GM12878 (cell line): ENCODE measurements at regions of chr10 and their contacts with region 1.

Region 1: GRCh38 chr10:110547139-110547761 is 20.2 kb upstream of the SMC3 start:
- DNase-seq: no peak
- ATAC-seq: peak; percentile 89
- H3K4me3 ChIP-seq: no peak overlapping the region
- H3K27ac ChIP-seq: no peak overlapping the region
- H3K4me1 ChIP-seq: peaks cover 5% of the 10 kb centered on the region; the same call in 1 of the 2 replicates
- H3K27me3 ChIP-seq: peaks cover 0 to 2% of the 10 kb centered on the region in 2 experiments; a peak in 1 of 4 replicates
- CTCF ChIP-seq: peak; percentile 72 to 83 (median 73)
- EP300 ChIP-seq: no peak
- POLR2A ChIP-seq: no peak
- RAD21 ChIP-seq: peak; percentile 95

Region 2: GRCh38 chr10:110304780-110305421 is 242.3 kb before region 1 on chr10 and contains the start of gene SMNDC1:
- CTCF ChIA-PET with region 1: interaction called, 191 read pairs
- POLR2A ChIA-PET with region 1: interaction called, 7 read pairs
- RAD21 ChIA-PET with region 1: interaction called, 151 read pairs
- SMC1A ChIA-PET with region 1: interaction called, 69 read pairs
- in situ Hi-C with region 1: loop called (anchors 5 kb)
- intact Hi-C with region 1: no loop called
- DNase-seq: peak; percentile 89
- ATAC-seq: peak; percentile 91
- H3K4me3 ChIP-seq: peak within 1 kb of the TSS; percentile 81
- H3K27ac ChIP-seq: peak within 1 kb of the TSS; percentile 88
- H3K4me1 ChIP-seq: peaks cover 7% of the 10 kb centered on the region; the same call in 1 of the 2 replicates
- H3K27me3 ChIP-seq: no peaks in the 10 kb centered on the region
- CTCF ChIP-seq: no peak
- EP300 ChIP-seq: no peak
- POLR2A ChIP-seq: peak; percentile 88
- RAD21 ChIP-seq: no peak
- polyA plus RNA-seq, gene SMNDC1: 10.1 to 12.9 TPM

Region 3: GRCh38 chr10:110317866-110318850 is 229.1 kb before region 1 on chr10:
- CTCF ChIA-PET with region 1: interaction called, 79 read pairs
- POLR2A ChIA-PET with region 1: interaction called, 4 read pairs
- RAD21 ChIA-PET with region 1: interaction called, 74 read pairs
- SMC1A ChIA-PET with region 1: interaction called, 31 read pairs
- in situ Hi-C with region 1: loop called (anchors 5 kb)
- intact Hi-C with region 1: no loop called
- DNase-seq: no peak
- ATAC-seq: peak; percentile 84
- H3K4me3 ChIP-seq: no peak overlapping the region
- H3K27ac ChIP-seq: peak overlapping the region; percentile 17
- H3K4me1 ChIP-seq: peaks cover 5% of the 10 kb centered on the region; the same call in 1 of the 2 replicates
- H3K27me3 ChIP-seq: no peaks in the 10 kb centered on the region
- CTCF ChIP-seq: no peak
- EP300 ChIP-seq: no peak
- POLR2A ChIP-seq: no peak
- RAD21 ChIP-seq: no peak

Region 4: GRCh38 chr10:110502851-110503301 is 44.4 kb before region 1 on chr10:
- CTCF ChIA-PET with region 1: interaction called, 44 read pairs
- POLR2A ChIA-PET with region 1: interaction called, 5 read pairs
- RAD21 ChIA-PET with region 1: interaction called, 62 read pairs
- SMC1A ChIA-PET with region 1: interaction called, 81 read pairs
- in situ Hi-C with region 1: no loop called
- intact Hi-C with region 1: loop called (anchors 1 kb)
- DNase-seq: peak; percentile 93
- ATAC-seq: peak; percentile 35
- H3K4me3 ChIP-seq: peak overlapping the region; percentile 95
- H3K27ac ChIP-seq: peak overlapping the region; percentile 91
- H3K4me1 ChIP-seq: peaks cover 49% of the 10 kb centered on the region
- H3K27me3 ChIP-seq: no peaks in the 10 kb centered on the region
- CTCF ChIP-seq: no peak
- EP300 ChIP-seq: peak; percentile 82 to 93; a peak in 3 of 4 replicates
- POLR2A ChIP-seq: peak; percentile 49
- RAD21 ChIP-seq: peak; percentile 21; the same call in 1 of the 2 replicates

Region 5: GRCh38 chr10:110535958-110536891 is 11.0 kb before region 1 on chr10:
- CTCF ChIA-PET with region 1: interaction called, 7 read pairs
- POLR2A ChIA-PET with region 1: interaction called, 5 read pairs
- RAD21 ChIA-PET with region 1: interaction called, 7 read pairs
- SMC1A ChIA-PET with region 1: interaction called, 53 read pairs
- in situ Hi-C with region 1: no loop called
- intact Hi-C with region 1: no loop called
- DNase-seq: peak; percentile 87
- ATAC-seq: peak; percentile 91
- H3K4me3 ChIP-seq: no peak overlapping the region; the same call in 1 of the 2 replicates
- H3K27ac ChIP-seq: peak overlapping the region; percentile 67
- H3K4me1 ChIP-seq: peaks cover 29% of the 10 kb centered on the region
- H3K27me3 ChIP-seq: no peaks in the 10 kb centered on the region
- CTCF ChIP-seq: peak; percentile 28 to 48 (median 37); a peak in 4 of 6 replicates
- EP300 ChIP-seq: peak; percentile 84 to 85; a peak in 3 of 4 replicates
- POLR2A ChIP-seq: no peak
- RAD21 ChIP-seq: peak; percentile 68

Region 6: DNA sequence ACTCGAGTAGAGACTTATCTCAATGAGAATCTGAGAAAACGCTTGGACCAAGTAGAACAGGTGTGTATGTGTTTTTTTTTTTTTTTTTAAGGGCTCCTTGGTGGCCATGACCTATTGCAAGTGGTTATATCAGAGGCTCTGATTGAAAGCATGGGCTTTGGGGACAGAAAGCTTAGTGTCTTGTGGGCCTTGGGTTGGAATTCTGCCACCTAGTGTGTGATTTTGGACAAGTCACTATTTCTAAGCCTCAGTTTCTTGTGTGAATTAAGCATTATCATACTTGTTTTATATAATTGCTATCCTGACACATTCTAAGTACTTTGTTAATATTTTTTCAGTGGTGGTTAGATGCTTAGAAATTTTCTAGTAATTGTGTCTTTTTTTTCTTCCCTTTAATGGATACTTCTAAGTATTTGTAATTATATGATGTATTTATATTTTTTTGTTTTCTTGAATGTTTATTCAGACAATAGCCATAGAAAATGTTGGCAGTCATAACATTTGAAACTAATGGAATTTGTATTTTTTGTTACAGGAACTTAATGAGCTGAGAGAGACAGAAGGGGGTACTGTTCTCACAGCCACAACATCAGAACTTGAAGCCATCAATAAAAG is 53.3 kb after region 1 on chr10:
- CTCF ChIA-PET with region 1: interaction called, 21 read pairs
- POLR2A ChIA-PET with region 1: no interaction called
- RAD21 ChIA-PET with region 1: interaction called, 4 read pairs
- SMC1A ChIA-PET with region 1: interaction called, 8 read pairs
- in situ Hi-C with region 1: no loop called
- intact Hi-C with region 1: no loop called
- DNase-seq: no peak
- ATAC-seq: peak; percentile 95
- H3K4me3 ChIP-seq: no peak overlapping the region
- H3K27ac ChIP-seq: no peak overlapping the region
- H3K4me1 ChIP-seq: no peaks in the 10 kb centered on the region
- H3K27me3 ChIP-seq: no peaks in the 10 kb centered on the region
- CTCF ChIP-seq: peak; percentile 40 to 58 (median 54); a peak in 5 of 6 replicates
- EP300 ChIP-seq: no peak
- POLR2A ChIP-seq: no peak
- RAD21 ChIP-seq: peak; percentile 54; the same call in 1 of the 2 replicates